ENCODE measurements at regions of chr4 and their contacts with region 1.

Region 1: DNA sequence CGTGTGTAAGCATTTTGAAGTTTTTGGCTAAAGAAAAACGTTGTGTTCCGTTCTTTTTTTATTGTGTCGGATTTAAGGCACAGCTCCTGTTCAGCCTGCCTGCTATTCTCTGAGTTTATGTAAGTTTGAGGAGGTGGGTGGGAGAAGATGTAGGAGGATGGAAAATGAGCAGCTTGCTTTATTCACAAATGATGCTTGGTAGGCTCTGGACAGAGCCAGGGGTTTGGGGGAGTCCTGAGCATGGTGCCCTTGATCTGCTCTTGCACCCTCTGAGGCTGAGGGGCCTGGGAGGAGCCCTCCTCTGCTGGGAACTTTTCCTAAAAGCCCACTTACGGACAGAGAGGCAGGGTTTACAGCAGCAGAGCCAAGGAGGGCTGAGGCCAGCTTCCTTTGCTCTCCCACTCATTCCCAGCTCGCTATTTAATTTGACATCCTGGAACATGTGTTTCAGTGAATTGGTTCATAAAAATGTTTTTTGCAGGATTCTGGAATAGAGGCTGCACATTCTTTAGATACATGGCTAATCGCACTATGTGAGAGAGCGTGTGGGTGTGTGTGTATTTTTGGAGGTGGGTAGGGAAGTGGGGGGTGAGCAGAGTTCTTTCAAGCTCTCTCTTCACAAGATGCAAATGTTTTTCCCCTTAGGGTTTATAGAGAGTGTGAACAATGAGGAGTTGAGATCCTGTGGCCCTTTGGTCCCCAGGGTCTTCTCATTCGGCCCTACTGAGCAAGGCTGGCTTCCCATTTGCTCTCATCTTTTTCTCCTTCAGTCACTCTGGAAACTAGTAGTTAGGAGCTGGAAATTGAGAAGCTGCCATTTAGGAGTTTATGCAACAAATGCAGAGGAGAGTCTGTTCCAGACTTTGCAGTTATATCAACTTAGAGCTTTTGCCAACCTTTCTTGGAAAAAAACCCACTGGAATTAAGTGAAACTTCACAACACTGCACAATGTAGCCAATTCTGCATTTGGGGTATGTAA is 32.1 kb downstream of the TMEM131L start:
- DNase-seq: peak in 6 of 35 experiments; percentile 10 to 48 (median 30)
- ATAC-seq: peak; percentile 25 to 55 (median 48)
- H3K4me3 ChIP-seq: peak overlapping the region; percentile 10 to 42
- H3K4me3 Mint-ChIP-seq: peak overlapping the region; percentile 66 to 76 (median 74)
- H3K27ac ChIP-seq: peak overlapping the region; percentile 86
- H3K27ac Mint-ChIP-seq: peak overlapping the region; percentile 95 to 99
- H3K4me1 ChIP-seq: peaks cover 74 to 77% of the 10 kb centered on the region in 2 experiments
- H3K4me1 Mint-ChIP-seq: peaks cover 94 to 97% (median 95%) of the 10 kb centered on the region in 3 donors
- H3K27me3 ChIP-seq: no peaks in the 10 kb centered on the region
- H3K27me3 Mint-ChIP-seq: no peaks in the 10 kb centered on the region

Region 2: DNA sequence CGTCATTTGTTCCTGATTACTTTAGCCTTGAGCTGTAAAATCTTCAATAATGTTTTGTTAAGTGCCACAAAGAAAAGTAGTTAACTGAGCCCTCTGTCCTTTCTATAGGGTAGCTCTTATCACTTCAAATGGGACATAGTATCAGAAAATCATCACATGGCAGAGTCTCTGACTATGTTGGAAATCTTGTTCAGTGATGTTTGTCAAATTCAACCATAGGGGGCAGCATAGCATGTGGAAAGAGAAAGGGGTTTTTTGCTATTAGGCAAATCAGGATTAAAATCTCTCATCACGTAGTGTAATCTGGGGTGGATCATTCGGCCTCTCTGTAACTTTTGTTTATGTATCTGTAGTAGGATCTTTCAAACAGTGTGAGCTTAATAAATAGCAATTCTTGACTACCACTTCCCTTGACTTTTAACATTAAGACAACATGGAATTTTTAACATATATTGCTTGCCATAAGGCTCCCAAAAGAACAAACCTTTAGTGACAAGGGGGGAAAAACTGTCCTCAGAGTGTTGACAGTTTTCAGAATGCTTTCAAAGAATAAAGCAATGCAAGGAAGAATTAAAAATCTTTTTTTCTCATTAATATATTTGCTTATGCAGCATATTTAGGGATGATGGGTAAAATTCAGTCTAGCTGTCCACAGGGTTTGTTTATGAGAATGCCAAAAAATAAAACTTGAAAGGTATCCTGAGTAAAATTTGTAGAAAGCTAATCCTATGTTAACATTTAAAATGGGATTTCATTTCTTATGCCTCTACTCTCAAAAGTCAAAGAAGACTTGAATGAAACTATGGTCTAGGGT is 1089.6 kb before region 1 on chr4:
- CTCF ChIA-PET with region 1: no interaction called
- POLR2A ChIA-PET with region 1: no interaction called
- DNase-seq: peak in 8 of 35 experiments; percentile 5 to 60 (median 12)
- ATAC-seq: peak in 1 of 4 experiments; percentile 44
- H3K4me3 ChIP-seq: no peak overlapping the region
- H3K4me3 Mint-ChIP-seq: no peak overlapping the region
- H3K27ac ChIP-seq: no peak overlapping the region
- H3K27ac Mint-ChIP-seq: no peak overlapping the region
- H3K4me1 ChIP-seq: no peaks in the 10 kb centered on the region
- H3K4me1 Mint-ChIP-seq: peaks cover 0 to 17% (median 13%) of the 10 kb centered on the region in 3 donors
- H3K27me3 ChIP-seq: no peaks in the 10 kb centered on the region
- H3K27me3 Mint-ChIP-seq: no peaks in the 10 kb centered on the region

Region 3: DNA sequence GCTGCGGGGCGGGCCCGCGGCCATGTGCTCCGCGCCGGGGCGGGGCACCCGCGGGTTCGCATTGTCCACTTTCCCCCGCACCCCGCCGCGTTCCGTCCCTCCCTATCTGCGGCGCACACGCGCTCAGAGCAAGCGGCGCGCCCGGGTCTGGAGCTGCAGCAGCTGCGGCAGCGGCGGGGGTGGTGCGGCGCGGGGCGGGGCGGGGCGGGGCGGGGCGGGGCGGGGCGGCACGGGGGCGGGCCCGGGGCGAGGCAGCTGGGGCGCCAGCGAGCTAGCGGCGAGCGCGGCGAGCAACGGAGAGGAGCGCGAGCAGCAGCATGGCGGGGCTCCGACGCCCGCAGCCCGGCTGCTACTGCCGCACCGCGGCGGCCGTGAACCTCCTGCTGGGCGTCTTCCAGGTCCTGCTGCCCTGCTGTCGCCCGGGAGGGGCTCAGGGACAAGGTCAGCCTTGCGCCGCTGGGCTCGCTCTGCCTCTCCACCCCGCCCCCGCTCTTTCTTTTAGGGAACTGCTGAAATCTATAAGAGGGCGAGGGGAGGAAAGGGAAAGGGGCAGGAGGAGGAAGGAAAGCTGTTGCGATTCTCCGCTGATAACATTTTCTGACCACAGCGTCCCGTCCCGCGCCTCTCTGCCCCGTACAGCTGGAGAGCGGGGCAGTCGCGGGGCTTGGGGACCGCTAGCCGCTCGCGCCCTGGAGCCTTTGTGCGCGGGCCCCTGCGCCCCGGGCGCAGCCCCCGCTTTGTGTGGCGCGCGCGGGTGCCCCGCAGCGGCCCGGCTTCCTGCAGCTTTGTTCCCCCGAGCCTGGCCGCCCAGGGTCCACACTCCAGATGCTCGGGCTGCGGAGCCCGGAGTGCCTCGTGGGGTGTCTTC is 32.0 kb before region 1 on chr4 and contains the start of gene TMEM131L:
- CTCF ChIA-PET with region 1: interaction called, 6 to 11 read pairs
- POLR2A ChIA-PET with region 1: interaction called, 3 to 11 read pairs
- DNase-seq: peak; percentile 47 to 90 (median 65)
- ATAC-seq: peak; percentile 80 to 83 (median 83)
- H3K4me3 ChIP-seq: peak within 1 kb of the TSS; percentile 95 to 97
- H3K4me3 Mint-ChIP-seq: peak within 1 kb of the TSS; percentile 94 to 96 (median 94)
- H3K27ac ChIP-seq: peak within 1 kb of the TSS; percentile 88
- H3K27ac Mint-ChIP-seq: peak within 1 kb of the TSS; percentile 92 to 97
- H3K4me1 ChIP-seq: peaks cover 29 to 30% of the 10 kb centered on the region in 2 experiments
- H3K4me1 Mint-ChIP-seq: peaks cover 37 to 45% (median 43%) of the 10 kb centered on the region in 3 donors
- H3K27me3 ChIP-seq: no peaks in the 10 kb centered on the region
- H3K27me3 Mint-ChIP-seq: no peaks in the 10 kb centered on the region
- total RNA-seq, gene TMEM131L: 60.7 to 115 (median 72.6) TPM

Region 4: GRCh38 chr4:153488006-153488891 is 10.0 kb before region 1 on chr4:
- CTCF ChIA-PET with region 1: interaction called in 1 of 2 experiments, 11 read pairs
- POLR2A ChIA-PET with region 1: interaction called, 4 to 5 read pairs
- DNase-seq: peak; percentile 42 to 90 (median 81)
- ATAC-seq: peak; percentile 66 to 86 (median 67)
- H3K4me3 ChIP-seq: peak overlapping the region; percentile 51 to 70
- H3K4me3 Mint-ChIP-seq: peak overlapping the region; percentile 75 to 79 (median 76)
- H3K27ac ChIP-seq: peak overlapping the region; percentile 95
- H3K27ac Mint-ChIP-seq: peak overlapping the region; percentile 96 to 98
- H3K4me1 ChIP-seq: peaks cover 64 to 68% of the 10 kb centered on the region in 2 experiments
- H3K4me1 Mint-ChIP-seq: peaks cover 87 to 89% (median 88%) of the 10 kb centered on the region in 3 donors
- H3K27me3 ChIP-seq: no peaks in the 10 kb centered on the region
- H3K27me3 Mint-ChIP-seq: no peaks in the 10 kb centered on the region

Measured in T-cell (primary cell).